ENCODE measurements at regions of chr12 and their contacts with region 1.

Region 1: DNA sequence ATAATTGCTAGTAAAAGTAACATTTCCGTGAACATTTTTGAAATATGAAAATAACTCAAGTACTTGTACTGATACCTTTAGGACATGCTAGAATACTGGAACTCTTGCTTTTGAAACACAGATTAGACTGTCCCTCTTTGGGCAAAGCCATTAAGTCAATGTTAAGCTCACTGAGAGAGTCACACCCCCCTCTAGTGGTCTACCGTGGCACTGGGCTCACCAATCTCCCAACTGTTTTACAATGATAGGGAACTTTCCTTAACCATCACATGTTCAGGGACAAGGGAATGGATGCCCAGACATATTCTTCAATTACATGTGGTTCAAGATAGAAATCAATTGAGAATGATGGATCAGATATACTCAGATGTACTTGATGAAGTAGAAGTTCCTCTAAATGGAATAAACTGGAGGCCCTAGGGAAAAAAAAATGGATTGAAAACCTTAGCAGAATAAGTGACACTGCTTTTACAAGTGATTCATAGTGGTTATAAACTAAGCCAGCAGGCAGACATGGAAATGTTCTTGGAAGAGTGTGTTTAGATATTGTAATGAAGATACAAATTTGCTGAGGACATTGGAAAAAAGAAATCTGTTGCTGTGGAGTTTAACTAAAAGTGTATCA is 17.8 kb downstream of the NANOG start:
- DNase-seq: peak; percentile 59 to 70 (median 66)
- ATAC-seq: peak; percentile 91 to 97 (median 95)
- H3K4me3 ChIP-seq: no peak overlapping the region
- H3K27ac ChIP-seq: no peak overlapping the region
- H3K4me1 ChIP-seq: no peaks in the 10 kb centered on the region
- H3K27me3 ChIP-seq: no peaks in the 10 kb centered on the region
- CTCF ChIP-seq: peak; percentile 68 to 95 (median 90)
- POLR2A ChIP-seq: no peak

Region 2: DNA sequence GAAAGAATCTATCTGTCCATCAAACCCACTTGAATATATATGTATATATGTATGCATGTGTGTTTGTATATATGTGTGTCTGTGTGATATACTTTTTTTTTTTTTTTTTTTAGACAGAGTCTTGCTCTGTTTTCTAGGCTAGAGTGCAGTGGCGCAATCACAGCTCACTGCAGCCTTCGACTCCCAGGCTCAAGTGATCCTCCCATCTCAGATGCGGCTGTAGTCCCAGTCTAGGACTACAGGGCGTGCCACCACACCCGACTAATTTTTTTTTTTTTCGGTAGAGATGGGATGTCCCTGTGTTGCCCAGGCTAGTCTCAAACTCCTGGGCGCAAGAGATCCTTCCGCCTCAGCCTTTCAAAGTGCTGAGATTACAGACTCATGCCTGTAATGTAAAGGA is 128.2 kb before region 1 on chr12:
- intact Hi-C with region 1: loop called in 1 of 2 experiments (anchors 10 kb)
- DNase-seq: no peak
- ATAC-seq: no peak
- H3K4me3 ChIP-seq: no peak overlapping the region
- H3K27ac ChIP-seq: no peak overlapping the region
- H3K4me1 ChIP-seq: no peaks in the 10 kb centered on the region
- H3K27me3 ChIP-seq: no peaks in the 10 kb centered on the region
- CTCF ChIP-seq: no peak
- POLR2A ChIP-seq: no peak

Region 3: DNA sequence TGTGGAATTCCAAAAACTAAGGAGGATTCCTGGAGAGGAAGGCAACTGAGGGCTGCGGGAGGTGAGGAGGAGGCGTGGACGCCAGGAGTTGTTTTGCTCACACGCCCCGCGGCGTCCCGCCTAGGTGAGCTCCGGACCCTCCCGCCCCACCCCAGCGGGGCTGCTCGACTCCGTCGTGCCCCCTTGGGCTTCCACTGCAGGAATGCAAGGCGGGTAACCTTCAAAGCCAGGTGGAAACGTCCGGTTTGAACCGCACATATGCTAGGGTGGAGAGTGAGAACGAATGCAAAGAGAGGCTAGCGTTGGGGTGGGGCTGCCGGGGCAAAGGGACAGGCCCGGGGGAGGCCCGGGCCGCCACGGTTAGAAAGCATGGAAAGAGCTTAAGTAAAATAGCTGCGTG is 101.1 kb before region 1 on chr12:
- intact Hi-C with region 1: no loop called
- DNase-seq: no peak
- ATAC-seq: no peak
- H3K4me3 ChIP-seq: no peak overlapping the region
- H3K27ac ChIP-seq: no peak overlapping the region
- H3K4me1 ChIP-seq: no peaks in the 10 kb centered on the region
- H3K27me3 ChIP-seq: no peaks in the 10 kb centered on the region
- CTCF ChIP-seq: no peak
- POLR2A ChIP-seq: no peak

Region 4: GRCh38 chr12:7769999-7770398 is 37.0 kb before region 1 on chr12:
- intact Hi-C with region 1: no loop called
- DNase-seq: no peak
- ATAC-seq: no peak
- H3K4me3 ChIP-seq: no peak overlapping the region
- H3K27ac ChIP-seq: no peak overlapping the region
- H3K4me1 ChIP-seq: no peaks in the 10 kb centered on the region
- H3K27me3 ChIP-seq: no peaks in the 10 kb centered on the region
- CTCF ChIP-seq: no peak
- POLR2A ChIP-seq: no peak

Region 5: DNA sequence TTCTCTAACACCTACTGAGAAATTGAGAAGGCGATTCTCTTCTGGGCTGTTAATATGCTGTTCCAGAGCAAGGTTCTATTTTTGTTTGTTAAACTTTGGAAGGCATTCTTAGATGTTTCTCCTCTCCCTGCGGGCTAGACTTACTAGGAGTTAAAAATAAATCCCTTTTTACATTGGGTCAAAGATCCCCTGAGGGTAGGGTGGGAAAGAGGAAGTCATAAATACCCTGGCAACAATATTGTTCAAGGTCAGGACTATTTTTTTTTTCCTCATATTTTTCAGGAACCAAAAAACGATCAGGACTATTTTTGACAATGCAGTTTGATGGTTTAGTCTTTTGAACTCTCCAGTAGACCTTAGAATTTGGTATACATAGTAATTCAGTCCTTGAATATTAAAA is 77.7 kb after region 1 on chr12:
- intact Hi-C with region 1: no loop called
- DNase-seq: no peak
- ATAC-seq: no peak
- H3K4me3 ChIP-seq: no peak overlapping the region
- H3K27ac ChIP-seq: no peak overlapping the region
- H3K4me1 ChIP-seq: no peaks in the 10 kb centered on the region
- H3K27me3 ChIP-seq: no peaks in the 10 kb centered on the region
- CTCF ChIP-seq: no peak
- POLR2A ChIP-seq: no peak

Region 6: DNA sequence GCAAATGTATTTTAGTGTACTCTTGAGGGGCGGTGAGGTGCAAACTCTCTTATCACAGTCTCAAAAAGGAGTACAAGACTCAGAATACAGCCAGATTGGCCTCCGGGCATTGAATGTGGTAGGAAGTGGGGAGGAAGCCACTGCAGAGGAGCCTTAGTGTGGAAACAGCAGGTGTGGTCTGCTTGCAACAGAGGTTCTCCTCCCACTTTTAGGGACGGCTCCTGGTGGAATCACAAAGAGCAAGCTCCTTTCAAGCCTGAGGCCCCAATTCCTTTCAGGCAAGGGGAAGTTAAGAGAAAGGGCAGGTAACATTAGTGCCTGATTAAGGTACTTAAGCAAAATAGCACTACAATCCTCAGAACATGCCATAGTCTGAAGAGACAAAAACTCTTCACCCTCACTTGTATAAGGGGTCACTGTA is 152.7 kb after region 1 on chr12:
- intact Hi-C with region 1: no loop called
- DNase-seq: peak in 1 of 3 donors; percentile 47
- ATAC-seq: peak; percentile 29 to 52 (median 40)
- H3K4me3 ChIP-seq: no peak overlapping the region
- H3K27ac ChIP-seq: no peak overlapping the region
- H3K4me1 ChIP-seq: no peaks in the 10 kb centered on the region
- H3K27me3 ChIP-seq: no peaks in the 10 kb centered on the region
- CTCF ChIP-seq: no peak
- POLR2A ChIP-seq: no peak